ENCODE measurements at regions of chr17 and their contacts with region 1.

Region 1: DNA sequence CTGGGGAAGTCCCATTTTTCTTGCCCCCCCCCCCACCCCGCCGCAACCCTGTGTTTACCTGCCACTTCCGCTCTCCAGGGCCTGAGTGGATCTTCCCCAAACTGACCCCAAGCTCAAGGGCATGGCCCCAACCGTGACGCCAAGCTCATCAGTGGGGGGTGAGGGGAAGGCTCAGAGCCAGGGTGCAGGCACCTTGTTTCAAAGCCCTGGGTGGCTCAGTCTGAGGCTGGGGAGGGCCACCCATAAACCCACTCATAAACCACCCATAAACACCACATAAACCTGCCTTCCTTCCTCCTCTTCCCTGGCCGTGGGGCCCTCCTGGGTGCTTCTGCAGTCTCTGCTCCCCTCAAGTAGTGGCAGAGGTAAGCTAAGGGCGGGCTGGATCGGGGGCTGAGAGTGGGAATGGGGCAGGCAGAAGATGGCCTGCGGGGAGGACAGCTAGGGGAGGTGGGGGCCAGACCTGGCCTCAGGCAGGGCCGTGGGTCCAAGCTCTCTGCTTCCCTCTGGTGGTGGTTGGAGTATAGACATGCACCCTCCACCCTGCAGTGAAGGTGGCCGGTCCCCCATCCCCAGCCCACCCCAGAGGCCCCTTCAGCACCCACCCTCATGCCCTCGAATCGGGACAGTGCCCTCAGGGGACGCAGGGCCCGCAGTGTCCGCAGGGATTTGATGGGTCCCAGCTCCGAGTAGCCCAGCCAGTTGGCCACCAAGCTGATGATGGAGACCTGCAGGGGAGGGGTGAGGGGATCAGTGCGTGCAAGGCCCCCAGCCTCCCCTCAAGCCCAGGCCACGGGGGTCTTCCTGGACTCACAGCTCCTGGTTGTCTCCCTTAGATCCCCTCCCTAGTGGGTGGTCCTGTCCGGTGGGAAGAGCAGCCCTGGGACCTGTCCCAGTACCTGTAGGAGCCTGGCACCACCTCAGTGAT is 14.6 kb upstream of the CD79B start:
- DNase-seq: peak; percentile 59 to 69 (median 64)
- H3K4me3 ChIP-seq: peak overlapping the region; percentile 6 to 31
- H3K4me3 Mint-ChIP-seq: peak overlapping the region; percentile 41 to 87 (median 78)
- H3K27ac ChIP-seq: no peak overlapping the region
- H3K27ac Mint-ChIP-seq: peak overlapping the region in 6 of 7 donors; percentile 57 to 88 (median 71)
- H3K4me1 ChIP-seq: peaks cover 22% of the 10 kb centered on the region
- H3K4me1 Mint-ChIP-seq: peaks cover 4 to 31% (median 19%) of the 10 kb centered on the region in 4 donors
- H3K27me3 ChIP-seq: no peaks in the 10 kb centered on the region
- H3K27me3 Mint-ChIP-seq: no peaks in the 10 kb centered on the region

Region 2: GRCh38 chr17:63911657-63912426 is 34.9 kb before region 1 on chr17:
- CTCF ChIA-PET with region 1: interaction called, 131 read pairs
- POLR2A ChIA-PET with region 1: no interaction called
- intact Hi-C with region 1: no loop called
- DNase-seq: peak; percentile 48 to 63 (median 52)
- H3K4me3 ChIP-seq: no peak overlapping the region
- H3K4me3 Mint-ChIP-seq: no peak overlapping the region
- H3K27ac ChIP-seq: no peak overlapping the region
- H3K27ac Mint-ChIP-seq: peak overlapping the region in 1 of 7 donors; percentile 87
- H3K4me1 ChIP-seq: no peaks in the 10 kb centered on the region
- H3K4me1 Mint-ChIP-seq: peaks cover 0 to 2% (median 0%) of the 10 kb centered on the region in 4 donors
- H3K27me3 ChIP-seq: no peaks in the 10 kb centered on the region
- H3K27me3 Mint-ChIP-seq: peaks cover 0 to 2% of the 10 kb centered on the region in 2 donors

Region 3: GRCh38 chr17:63931099-63931561 is 15.6 kb before region 1 on chr17:
- CTCF ChIA-PET with region 1: interaction called, 28 read pairs
- POLR2A ChIA-PET with region 1: interaction called, 25 read pairs
- intact Hi-C with region 1: no loop called
- DNase-seq: peak; percentile 43 to 66 (median 49)
- H3K4me3 ChIP-seq: peak overlapping the region; percentile 48 to 51
- H3K4me3 Mint-ChIP-seq: peak overlapping the region; percentile 92 to 98 (median 94)
- H3K27ac ChIP-seq: peak overlapping the region; percentile 71
- H3K27ac Mint-ChIP-seq: peak overlapping the region; percentile 48 to 96 (median 94)
- H3K4me1 ChIP-seq: peaks cover 25% of the 10 kb centered on the region
- H3K4me1 Mint-ChIP-seq: peaks cover 7 to 32% (median 22%) of the 10 kb centered on the region in 4 donors
- H3K27me3 ChIP-seq: no peaks in the 10 kb centered on the region
- H3K27me3 Mint-ChIP-seq: no peaks in the 10 kb centered on the region

Region 4: GRCh38 chr17:63984651-63985386 is 38.1 kb after region 1 on chr17:
- CTCF ChIA-PET with region 1: interaction called, 13 read pairs
- POLR2A ChIA-PET with region 1: interaction called, 4 read pairs
- intact Hi-C with region 1: loop called (anchors 5 kb)
- DNase-seq: peak; percentile 46 to 86 (median 70)
- H3K4me3 ChIP-seq: no peak overlapping the region
- H3K4me3 Mint-ChIP-seq: peak overlapping the region in 5 of 8 donors; percentile 10 to 86 (median 47)
- H3K27ac ChIP-seq: no peak overlapping the region
- H3K27ac Mint-ChIP-seq: peak overlapping the region; percentile 61 to 98 (median 87)
- H3K4me1 ChIP-seq: peaks cover 18% of the 10 kb centered on the region
- H3K4me1 Mint-ChIP-seq: peaks cover 16 to 29% (median 19%) of the 10 kb centered on the region in 4 donors
- H3K27me3 ChIP-seq: no peaks in the 10 kb centered on the region
- H3K27me3 Mint-ChIP-seq: peaks cover 0 to 2% of the 10 kb centered on the region in 2 donors

Region 5: GRCh38 chr17:63998050-63998720 is 51.5 kb after region 1 on chr17 and contains the start of gene PRR29:
- CTCF ChIA-PET with region 1: interaction called, 18 read pairs
- POLR2A ChIA-PET with region 1: interaction called, 8 read pairs
- intact Hi-C with region 1: no loop called
- DNase-seq: peak; percentile 70 to 81 (median 75)
- H3K4me3 ChIP-seq: peak within 1 kb of the TSS; percentile 5 to 76
- H3K4me3 Mint-ChIP-seq: peak within 1 kb of the TSS; percentile 87 to 94 (median 88)
- H3K27ac ChIP-seq: peak within 1 kb of the TSS; percentile 39
- H3K27ac Mint-ChIP-seq: peak within 1 kb of the TSS; percentile 60 to 91 (median 87)
- H3K4me1 ChIP-seq: peaks cover 46% of the 10 kb centered on the region
- H3K4me1 Mint-ChIP-seq: peaks cover 32 to 69% (median 42%) of the 10 kb centered on the region in 4 donors
- H3K27me3 ChIP-seq: no peaks in the 10 kb centered on the region
- H3K27me3 Mint-ChIP-seq: no peaks in the 10 kb centered on the region
- total RNA-seq, gene PRR29: 0.19 to 1.0 TPM

Region 6: DNA sequence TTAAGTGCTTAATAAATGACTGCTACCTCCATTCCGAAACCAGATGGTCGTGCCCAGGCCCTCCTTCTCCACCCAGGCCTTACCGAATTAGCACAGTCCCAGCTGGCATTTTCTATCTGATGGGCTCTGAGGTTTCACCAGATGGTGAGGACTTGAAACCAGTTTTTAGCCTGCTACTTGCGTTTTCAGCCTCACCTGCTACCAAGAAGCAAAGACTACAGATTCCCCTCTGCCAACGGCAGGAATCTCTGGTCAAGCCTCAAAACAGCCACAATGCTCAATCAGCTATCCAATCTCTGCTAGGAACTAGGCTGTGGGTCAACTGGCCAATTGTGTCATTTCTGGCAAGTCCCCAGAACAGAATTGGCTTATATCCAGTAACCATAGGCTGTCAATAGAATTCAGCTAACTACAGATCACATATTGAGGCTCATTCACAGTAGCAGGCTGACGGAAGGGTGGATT is 432.2 kb after region 1 on chr17:
- CTCF ChIA-PET with region 1: no interaction called
- POLR2A ChIA-PET with region 1: no interaction called
- intact Hi-C with region 1: no loop called
- DNase-seq: no peak
- H3K4me3 ChIP-seq: no peak overlapping the region
- H3K4me3 Mint-ChIP-seq: no peak overlapping the region
- H3K27ac ChIP-seq: no peak overlapping the region
- H3K27ac Mint-ChIP-seq: no peak overlapping the region
- H3K4me1 ChIP-seq: no peaks in the 10 kb centered on the region
- H3K4me1 Mint-ChIP-seq: peaks cover 0 to 4% (median 0%) of the 10 kb centered on the region in 4 donors
- H3K27me3 ChIP-seq: no peaks in the 10 kb centered on the region
- H3K27me3 Mint-ChIP-seq: no peaks in the 10 kb centered on the region

Region 7: GRCh38 chr17:64423881-64424280 is 477.2 kb after region 1 on chr17:
- CTCF ChIA-PET with region 1: no interaction called
- POLR2A ChIA-PET with region 1: no interaction called
- intact Hi-C with region 1: no loop called
- DNase-seq: no peak
- H3K4me3 ChIP-seq: no peak overlapping the region
- H3K4me3 Mint-ChIP-seq: no peak overlapping the region
- H3K27ac ChIP-seq: no peak overlapping the region
- H3K27ac Mint-ChIP-seq: peak overlapping the region in 1 of 7 donors; percentile 25
- H3K4me1 ChIP-seq: peaks cover 3% of the 10 kb centered on the region
- H3K4me1 Mint-ChIP-seq: no peaks in the 10 kb centered on the region
- H3K27me3 ChIP-seq: no peaks in the 10 kb centered on the region
- H3K27me3 Mint-ChIP-seq: peaks cover 0 to 1% of the 10 kb centered on the region in 2 donors